Common myeloid progenitor, CD34-positive (primary cell): ENCODE measurements at regions of chr1 and their contacts with region 1.

Region 1: GRCh38 chr1:36342481-36343478 is 19.3 kb upstream of the EVA1B start:
- DNase-seq: peak; percentile 52 to 67 (median 53)
- H3K4me3 ChIP-seq: no peak overlapping the region
- H3K27ac ChIP-seq: no peak overlapping the region
- H3K4me1 ChIP-seq: peaks cover 0 to 14% (median 8%) of the 10 kb centered on the region in 4 experiments
- H3K27me3 ChIP-seq: no peaks in the 10 kb centered on the region

Region 2: GRCh38 chr1:36279110-36279788 is 63.5 kb before region 1 on chr1:
- CTCF ChIA-PET with region 1: no interaction called
- POLR2A ChIA-PET with region 1: no interaction called
- DNase-seq: no peak
- H3K4me3 ChIP-seq: no peak overlapping the region
- H3K27ac ChIP-seq: peak overlapping the region in 1 of 2 experiments; percentile 43
- H3K4me1 ChIP-seq: no peaks in the 10 kb centered on the region
- H3K27me3 ChIP-seq: no peaks in the 10 kb centered on the region

Region 3: DNA sequence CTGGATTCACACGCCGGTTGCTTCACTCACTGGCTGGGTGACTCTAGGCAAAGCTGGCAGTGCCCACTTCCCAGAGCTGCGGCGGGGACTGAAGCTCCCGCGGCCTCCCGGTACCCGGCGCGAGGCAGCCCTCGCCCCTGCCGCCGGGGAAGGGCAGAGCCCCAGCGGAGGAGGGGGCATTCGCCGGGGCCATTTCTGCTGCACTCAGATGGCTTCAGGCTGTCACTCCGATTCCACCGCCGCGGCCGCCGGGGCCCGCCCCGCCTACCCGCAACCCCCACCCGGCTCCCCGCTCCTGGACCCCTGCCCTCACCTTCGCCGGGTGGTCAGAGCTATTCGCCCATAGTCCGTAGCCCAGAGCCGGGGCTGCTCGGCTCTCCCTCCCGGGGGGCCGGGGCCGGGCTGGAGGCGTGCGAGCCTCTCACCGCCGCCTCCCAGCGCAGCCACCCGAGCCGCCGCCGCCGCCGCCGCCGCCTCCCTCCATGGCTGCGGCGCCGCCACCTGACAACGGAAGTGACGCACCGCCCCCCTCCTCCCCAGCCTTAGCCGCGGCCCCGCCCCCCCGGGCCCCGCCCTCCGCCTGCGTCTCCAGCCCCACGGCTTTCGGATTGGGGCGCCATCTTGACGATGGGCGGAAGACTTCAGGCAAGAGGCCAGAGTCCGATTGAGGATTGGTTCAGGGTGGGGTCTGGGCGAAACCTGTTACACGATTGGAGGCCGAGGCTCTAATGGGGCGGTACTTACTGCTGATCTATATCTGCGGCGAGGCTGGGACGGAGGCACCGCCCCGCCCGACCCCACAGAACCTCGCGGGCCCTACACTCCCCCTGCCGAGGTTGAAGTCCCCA is 42.9 kb after region 1 on chr1 and contains the start of gene STK40:
- CTCF ChIA-PET with region 1: interaction called, 15 read pairs
- POLR2A ChIA-PET with region 1: no interaction called
- DNase-seq: peak; percentile 100
- H3K4me3 ChIP-seq: peak within 1 kb of the TSS; percentile 79 to 96 (median 89)
- H3K27ac ChIP-seq: peak within 1 kb of the TSS; percentile 95 to 99
- H3K4me1 ChIP-seq: peaks cover 16 to 50% (median 37%) of the 10 kb centered on the region in 4 experiments
- H3K27me3 ChIP-seq: no peaks in the 10 kb centered on the region

Region 4: GRCh38 chr1:36411674-36412520 is 69.1 kb after region 1 on chr1:
- CTCF ChIA-PET with region 1: interaction called, 86 read pairs
- POLR2A ChIA-PET with region 1: no interaction called
- DNase-seq: peak; percentile 47 to 86 (median 78)
- H3K4me3 ChIP-seq: peak overlapping the region in 1 of 7 experiments; percentile 4
- H3K27ac ChIP-seq: no peak overlapping the region
- H3K4me1 ChIP-seq: peaks cover 0 to 6% (median 3%) of the 10 kb centered on the region in 4 experiments
- H3K27me3 ChIP-seq: no peaks in the 10 kb centered on the region

Region 5: GRCh38 chr1:36420836-36421664 is 78.3 kb after region 1 on chr1:
- CTCF ChIA-PET with region 1: interaction called, 86 read pairs
- POLR2A ChIA-PET with region 1: interaction called, 3 read pairs
- DNase-seq: peak; percentile 73 to 87 (median 82)
- H3K4me3 ChIP-seq: no peak overlapping the region
- H3K27ac ChIP-seq: no peak overlapping the region
- H3K4me1 ChIP-seq: peaks cover 0 to 6% (median 5%) of the 10 kb centered on the region in 4 experiments
- H3K27me3 ChIP-seq: no peaks in the 10 kb centered on the region

Region 6: DNA sequence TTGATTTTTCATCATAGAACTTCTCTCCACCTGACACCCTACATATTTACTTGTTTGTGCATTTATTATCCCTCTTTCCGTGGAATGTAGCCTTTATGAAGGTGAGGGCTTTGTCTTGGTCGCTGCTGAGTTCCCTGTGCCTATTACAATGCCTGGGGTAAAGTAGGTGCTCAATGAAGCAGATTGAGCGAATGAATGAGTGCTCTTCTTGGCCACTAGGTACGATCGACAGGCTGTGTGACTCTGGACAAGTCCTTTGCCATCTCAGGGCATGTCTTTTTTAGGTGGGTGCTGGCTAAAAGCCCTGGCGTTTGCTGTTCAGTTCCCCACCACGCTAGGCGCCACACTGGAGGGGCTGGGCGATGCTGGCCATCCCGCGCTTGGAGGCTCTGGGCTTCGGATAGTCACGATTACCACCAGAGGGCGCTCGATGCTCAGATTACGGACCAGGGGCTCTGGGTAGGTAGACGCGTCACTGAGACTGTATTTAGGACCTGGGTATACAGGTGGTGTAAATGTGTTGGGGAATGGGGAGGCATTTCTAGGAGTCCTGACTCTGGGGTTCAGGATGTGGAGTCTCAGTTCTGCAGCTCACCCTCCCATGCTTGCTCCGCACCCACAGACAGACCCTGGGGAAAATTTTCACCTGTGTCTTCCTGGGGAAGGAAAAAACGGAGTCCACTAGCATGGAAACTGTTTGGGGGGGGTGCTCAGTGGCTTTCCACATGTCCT is 211.0 kb after region 1 on chr1:
- CTCF ChIA-PET with region 1: no interaction called
- POLR2A ChIA-PET with region 1: no interaction called
- DNase-seq: peak; percentile 64 to 78 (median 72)
- H3K4me3 ChIP-seq: no peak overlapping the region
- H3K27ac ChIP-seq: no peak overlapping the region
- H3K4me1 ChIP-seq: no peaks in the 10 kb centered on the region
- H3K27me3 ChIP-seq: peaks cover 4 to 34% (median 24%) of the 10 kb centered on the region in 5 experiments

Region 7: DNA sequence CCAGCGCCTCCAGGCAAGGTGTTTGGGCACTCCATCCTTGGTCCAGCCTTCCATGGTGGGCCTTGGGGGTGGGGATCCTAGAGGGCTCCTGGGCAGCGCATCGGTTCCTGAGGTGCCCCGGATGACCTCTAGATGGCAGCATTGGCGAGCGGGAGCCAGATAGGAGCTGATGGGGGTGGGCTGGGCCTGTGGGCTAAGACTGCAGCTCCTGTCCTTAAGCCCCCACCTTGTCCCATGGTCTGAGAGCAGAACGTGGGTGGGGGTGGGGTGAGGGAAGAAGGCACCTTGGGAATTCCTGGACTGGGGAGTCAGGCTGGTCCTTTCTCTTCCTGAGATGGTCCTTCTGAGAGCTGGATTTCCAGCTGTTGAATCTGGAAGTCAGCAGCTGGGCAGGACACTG is 233.3 kb after region 1 on chr1:
- CTCF ChIA-PET with region 1: no interaction called
- POLR2A ChIA-PET with region 1: no interaction called
- DNase-seq: peak; percentile 39 to 62 (median 48)
- H3K4me3 ChIP-seq: no peak overlapping the region
- H3K27ac ChIP-seq: no peak overlapping the region
- H3K4me1 ChIP-seq: no peaks in the 10 kb centered on the region
- H3K27me3 ChIP-seq: peaks cover 0 to 40% (median 8%) of the 10 kb centered on the region in 5 experiments